CD4-positive, alpha-beta T cell (primary cell): ENCODE measurements at regions of chr11 and their contacts with region 1.

Region 1: DNA sequence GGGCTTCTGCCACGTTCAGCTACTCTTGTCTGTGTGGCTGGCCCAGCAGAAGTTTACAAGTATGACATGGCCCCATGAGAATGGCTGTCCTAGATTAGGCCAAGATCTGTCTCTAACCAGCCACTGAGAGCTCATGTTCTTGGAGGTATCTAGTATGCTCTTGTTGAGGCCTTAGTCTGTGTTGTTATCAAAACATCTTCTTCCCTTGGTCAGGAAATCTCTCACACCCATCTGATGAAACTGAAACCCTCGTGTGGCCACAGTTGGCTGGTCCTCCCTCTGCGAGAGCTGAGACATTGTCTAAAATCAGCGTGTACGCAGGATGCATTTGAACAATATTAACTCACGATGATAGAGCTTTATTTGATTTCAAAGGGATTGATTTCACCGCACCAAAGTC is 109.0 kb upstream of the NNMT start:
- DNase-seq: no peak
- ATAC-seq: no peak
- H3K4me3 ChIP-seq: no peak overlapping the region
- H3K4me3 Mint-ChIP-seq: no peak overlapping the region
- H3K27ac ChIP-seq: no peak overlapping the region
- H3K27ac Mint-ChIP-seq: peak overlapping the region; percentile 80
- H3K4me1 ChIP-seq: peaks cover 34% of the 10 kb centered on the region
- H3K4me1 Mint-ChIP-seq: peaks cover 60% of the 10 kb centered on the region
- H3K27me3 ChIP-seq: no peaks in the 10 kb centered on the region
- H3K27me3 Mint-ChIP-seq: no peaks in the 10 kb centered on the region
- CTCF ChIP-seq: no peak

Region 2: GRCh38 chr11:113926273-113927197 is 260.6 kb before region 1 on chr11:
- CTCF ChIA-PET with region 1: no interaction called
- POLR2A ChIA-PET with region 1: no interaction called
- intact Hi-C with region 1: no loop called
- DNase-seq: no peak
- ATAC-seq: no peak
- H3K4me3 ChIP-seq: no peak overlapping the region
- H3K4me3 Mint-ChIP-seq: no peak overlapping the region
- H3K27ac ChIP-seq: no peak overlapping the region
- H3K27ac Mint-ChIP-seq: no peak overlapping the region
- H3K4me1 ChIP-seq: no peaks in the 10 kb centered on the region
- H3K4me1 Mint-ChIP-seq: no peaks in the 10 kb centered on the region
- H3K27me3 ChIP-seq: peaks cover 0 to 3% of the 10 kb centered on the region in 2 experiments
- H3K27me3 Mint-ChIP-seq: peaks cover 38% of the 10 kb centered on the region
- CTCF ChIP-seq: no peak

Region 3: DNA sequence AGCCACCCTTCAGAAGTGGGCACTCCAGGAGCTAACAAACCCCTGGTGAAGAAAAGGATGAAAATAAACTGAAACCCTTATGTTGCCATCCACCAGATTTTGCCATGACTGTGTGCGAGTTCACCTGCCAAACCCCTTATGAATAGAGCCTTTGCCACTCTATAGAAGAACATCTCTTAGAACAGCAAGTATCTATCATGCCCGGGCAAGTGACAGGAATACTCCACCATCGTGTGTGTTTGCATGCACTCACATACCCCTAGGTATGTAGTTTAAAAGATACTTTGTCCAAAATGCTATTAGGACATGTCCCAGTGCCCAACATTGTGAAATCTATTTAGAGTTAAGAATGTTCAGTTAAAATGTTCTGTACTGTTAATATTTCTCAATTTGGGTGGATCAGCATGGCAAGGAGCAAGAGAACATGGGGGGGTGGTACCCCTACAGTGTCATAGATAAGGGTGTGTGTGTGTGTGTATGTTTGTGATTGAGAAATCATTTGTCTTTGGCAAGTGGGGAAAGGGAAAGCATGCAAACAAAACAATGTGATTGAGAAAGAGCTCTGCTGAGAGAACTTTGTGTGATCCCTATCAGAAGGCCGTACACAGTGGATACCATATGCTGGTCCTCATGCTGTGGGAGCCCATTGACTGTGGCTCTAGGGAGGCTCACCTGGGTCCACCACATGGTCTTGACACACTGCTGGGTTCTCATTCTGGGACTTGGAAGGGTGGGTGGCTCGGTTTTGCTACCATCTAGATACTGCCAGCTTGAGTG is 32.7 kb before region 1 on chr11:
- CTCF ChIA-PET with region 1: interaction called, 4 read pairs
- POLR2A ChIA-PET with region 1: interaction called, 49 read pairs
- intact Hi-C with region 1: loop called in 1 of 2 experiments (anchors 5 kb)
- DNase-seq: no peak
- ATAC-seq: no peak
- H3K4me3 ChIP-seq: no peak overlapping the region
- H3K4me3 Mint-ChIP-seq: no peak overlapping the region
- H3K27ac ChIP-seq: no peak overlapping the region
- H3K27ac Mint-ChIP-seq: no peak overlapping the region
- H3K4me1 ChIP-seq: peaks cover 40% of the 10 kb centered on the region
- H3K4me1 Mint-ChIP-seq: peaks cover 57% of the 10 kb centered on the region
- H3K27me3 ChIP-seq: no peaks in the 10 kb centered on the region
- H3K27me3 Mint-ChIP-seq: no peaks in the 10 kb centered on the region
- CTCF ChIP-seq: no peak

Region 4: GRCh38 chr11:114166897-114167323 is 20.3 kb before region 1 on chr11:
- CTCF ChIA-PET with region 1: no interaction called
- POLR2A ChIA-PET with region 1: interaction called, 67 read pairs
- intact Hi-C with region 1: loop called in 1 of 2 experiments (anchors 2 kb)
- DNase-seq: peak in 4 of 14 experiments; percentile 53 to 77 (median 64)
- ATAC-seq: peak; percentile 62
- H3K4me3 ChIP-seq: no peak overlapping the region
- H3K4me3 Mint-ChIP-seq: peak overlapping the region; percentile 63
- H3K27ac ChIP-seq: no peak overlapping the region
- H3K27ac Mint-ChIP-seq: peak overlapping the region; percentile 63
- H3K4me1 ChIP-seq: peaks cover 89% of the 10 kb centered on the region
- H3K4me1 Mint-ChIP-seq: peaks cover 98% of the 10 kb centered on the region
- H3K27me3 ChIP-seq: no peaks in the 10 kb centered on the region
- H3K27me3 Mint-ChIP-seq: no peaks in the 10 kb centered on the region
- CTCF ChIP-seq: no peak

Region 5: DNA sequence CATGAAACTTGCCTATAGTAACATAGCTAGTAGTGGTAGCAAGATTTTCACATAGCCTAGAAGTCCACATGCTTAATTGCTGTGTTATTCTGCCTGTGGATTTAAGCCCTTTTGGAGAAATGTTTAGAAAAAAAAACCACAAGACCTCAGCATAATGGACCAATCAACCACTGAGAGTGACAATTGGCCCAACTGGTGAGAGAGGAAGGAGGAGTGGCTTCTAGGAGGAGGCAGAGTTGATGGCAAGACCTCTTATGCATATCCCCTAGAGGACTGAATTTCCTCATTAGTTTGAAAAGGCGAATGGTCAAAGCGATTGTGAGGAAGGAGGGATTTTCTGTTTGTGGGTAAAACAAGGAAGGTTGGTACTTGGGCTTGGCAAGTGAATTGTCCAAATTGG is 139.6 kb after region 1 on chr11:
- CTCF ChIA-PET with region 1: no interaction called
- POLR2A ChIA-PET with region 1: no interaction called
- intact Hi-C with region 1: no loop called
- DNase-seq: no peak
- ATAC-seq: no peak
- H3K4me3 ChIP-seq: no peak overlapping the region
- H3K4me3 Mint-ChIP-seq: no peak overlapping the region
- H3K27ac ChIP-seq: no peak overlapping the region
- H3K27ac Mint-ChIP-seq: no peak overlapping the region
- H3K4me1 ChIP-seq: no peaks in the 10 kb centered on the region
- H3K4me1 Mint-ChIP-seq: no peaks in the 10 kb centered on the region
- H3K27me3 ChIP-seq: no peaks in the 10 kb centered on the region
- H3K27me3 Mint-ChIP-seq: peaks cover 20% of the 10 kb centered on the region
- CTCF ChIP-seq: no peak